ENCODE measurements at regions of chr5 and their contacts with region 1.

Region 1: GRCh38 chr5:95846554-95847260 is 24.2 kb upstream of the GLRX start:
- DNase-seq: peak; percentile 79
- ATAC-seq: peak; percentile 54
- H3K4me3 Mint-ChIP-seq: no peak overlapping the region
- H3K27ac Mint-ChIP-seq: no peak overlapping the region
- H3K4me1 Mint-ChIP-seq: peaks cover 11% of the 10 kb centered on the region
- H3K27me3 Mint-ChIP-seq: peaks cover 4% of the 10 kb centered on the region

Region 2: DNA sequence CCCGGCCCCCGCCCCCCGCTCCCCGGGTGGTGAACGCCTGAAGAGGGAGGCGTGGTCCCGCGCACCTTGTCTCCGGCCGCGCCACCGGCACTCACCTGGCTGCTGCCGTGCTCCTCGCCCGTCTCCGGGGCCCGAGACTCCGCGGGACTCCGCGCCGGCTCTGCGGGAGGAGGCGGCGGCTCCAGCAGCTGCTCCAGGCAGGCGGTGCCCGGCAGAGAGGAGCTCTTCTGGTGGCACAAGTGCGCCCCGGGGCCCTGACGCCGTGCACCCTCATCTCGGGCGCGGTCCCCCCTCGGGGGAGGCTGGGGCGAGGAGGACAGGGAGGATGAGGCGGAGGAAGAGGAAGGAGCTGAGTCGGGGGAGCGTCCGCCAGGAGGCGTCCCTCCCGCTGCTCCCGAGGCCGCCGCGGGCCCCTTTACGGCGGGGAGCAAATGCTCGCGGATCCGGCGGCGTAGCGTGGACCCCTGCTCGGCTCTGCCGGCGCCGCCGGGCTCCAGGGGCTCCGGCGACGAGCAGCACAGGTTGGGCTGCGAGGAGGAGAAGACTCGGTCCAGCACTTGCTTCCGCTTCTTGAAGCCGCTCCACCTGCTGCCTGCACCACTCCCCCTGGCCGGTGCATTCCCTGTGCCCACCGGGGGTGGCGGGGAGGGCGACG is 562.8 kb before region 1 on chr5:
- CTCF ChIA-PET with region 1: no interaction called
- POLR2A ChIA-PET with region 1: no interaction called
- intact Hi-C with region 1: loop called in 1 of 2 experiments (anchors 10 kb)
- DNase-seq: peak; percentile 50
- ATAC-seq: peak; percentile 61
- H3K4me3 Mint-ChIP-seq: peak overlapping the region; percentile 26
- H3K27ac Mint-ChIP-seq: no peak overlapping the region
- H3K4me1 Mint-ChIP-seq: peaks cover 10% of the 10 kb centered on the region
- H3K27me3 Mint-ChIP-seq: peaks cover 52% of the 10 kb centered on the region

Region 3: GRCh38 chr5:95664204-95664786 is 182.4 kb before region 1 on chr5:
- CTCF ChIA-PET with region 1: interaction called, 29 read pairs
- POLR2A ChIA-PET with region 1: no interaction called
- intact Hi-C with region 1: loop called (anchors 1 kb)
- DNase-seq: peak; percentile 54
- ATAC-seq: no peak
- H3K4me3 Mint-ChIP-seq: no peak overlapping the region
- H3K27ac Mint-ChIP-seq: no peak overlapping the region
- H3K4me1 Mint-ChIP-seq: no peaks in the 10 kb centered on the region
- H3K27me3 Mint-ChIP-seq: no peaks in the 10 kb centered on the region

Region 4: DNA sequence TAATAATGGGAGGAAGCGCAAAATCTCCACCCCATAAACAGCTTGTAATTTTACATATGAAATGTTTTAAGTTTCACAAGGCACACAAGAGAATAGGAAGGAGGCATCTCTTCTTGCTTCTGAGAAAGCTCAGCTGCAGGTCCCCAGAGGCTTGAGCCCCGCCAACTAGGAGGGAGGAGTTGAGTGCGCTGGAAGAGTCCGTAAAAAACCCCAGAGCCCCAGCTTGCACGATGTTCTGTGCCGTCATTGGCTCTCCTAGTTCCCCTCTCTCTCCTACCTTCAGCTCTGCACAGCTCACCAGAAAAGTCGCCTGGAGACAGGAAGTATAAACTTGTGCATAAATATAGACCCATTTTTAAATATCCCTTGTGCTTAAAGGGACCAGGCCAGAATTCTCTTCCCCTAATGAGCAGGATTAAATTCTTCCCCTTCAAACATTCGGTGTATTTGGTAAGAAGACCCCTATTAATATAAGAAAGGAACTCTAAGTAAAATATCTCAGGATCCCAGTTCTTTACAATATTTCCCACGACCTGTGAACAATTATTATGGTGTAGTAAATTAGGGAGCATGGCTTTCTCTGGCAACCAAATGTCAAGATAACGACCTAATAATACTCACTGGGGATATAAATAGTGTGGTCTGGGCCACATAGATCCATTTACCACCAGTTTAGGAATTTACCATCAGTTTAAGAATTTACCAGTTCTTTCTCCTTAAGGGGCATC is 37.9 kb before region 1 on chr5:
- CTCF ChIA-PET with region 1: interaction called, 5 read pairs
- POLR2A ChIA-PET with region 1: no interaction called
- intact Hi-C with region 1: loop called in 1 of 2 experiments (anchors 1 kb)
- DNase-seq: peak; percentile 87
- ATAC-seq: peak; percentile 99
- H3K4me3 Mint-ChIP-seq: peak overlapping the region; percentile 28
- H3K27ac Mint-ChIP-seq: peak overlapping the region; percentile 85
- H3K4me1 Mint-ChIP-seq: peaks cover 56% of the 10 kb centered on the region
- H3K27me3 Mint-ChIP-seq: no peaks in the 10 kb centered on the region

Region 5: DNA sequence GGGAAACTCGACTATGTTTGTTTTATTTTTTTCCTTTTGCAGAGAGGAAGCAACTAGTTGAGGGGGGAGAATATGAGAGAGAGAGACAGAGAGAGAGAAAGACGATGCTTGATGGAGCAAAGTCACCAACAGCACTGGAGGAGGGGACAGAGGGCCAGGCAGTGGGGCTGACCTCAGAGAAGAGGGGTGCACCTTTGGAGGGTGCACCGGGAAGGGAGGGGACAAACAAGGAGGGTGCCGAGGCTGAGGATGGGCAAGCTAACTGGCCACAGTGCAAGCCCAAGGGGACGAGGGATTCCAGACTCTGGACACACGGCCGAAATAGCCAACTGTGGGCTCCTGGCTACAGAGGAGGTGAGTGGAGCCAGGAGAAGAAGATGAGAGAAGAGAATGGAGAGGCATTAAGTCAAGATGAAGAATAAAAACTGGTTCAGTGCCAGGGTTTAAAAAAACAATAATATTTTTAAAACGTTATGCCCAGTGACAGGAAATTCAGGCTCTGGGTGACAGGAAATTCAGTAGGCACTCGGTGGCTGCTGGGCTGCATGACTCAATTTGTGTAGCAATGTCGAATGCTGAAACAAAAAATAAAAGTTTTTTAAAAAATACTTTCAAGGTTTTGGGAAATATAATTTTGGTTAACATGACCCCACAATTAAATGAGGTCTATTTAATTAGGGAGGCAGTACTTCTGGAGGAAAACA is 10.9 kb before region 1 on chr5:
- CTCF ChIA-PET with region 1: interaction called, 27 read pairs
- POLR2A ChIA-PET with region 1: interaction called, 4 read pairs
- intact Hi-C with region 1: loop called (anchors 1 kb)
- DNase-seq: peak; percentile 49
- ATAC-seq: no peak
- H3K4me3 Mint-ChIP-seq: peak overlapping the region; percentile 79
- H3K27ac Mint-ChIP-seq: peak overlapping the region; percentile 91
- H3K4me1 Mint-ChIP-seq: peaks cover 44% of the 10 kb centered on the region
- H3K27me3 Mint-ChIP-seq: no peaks in the 10 kb centered on the region

Region 6: DNA sequence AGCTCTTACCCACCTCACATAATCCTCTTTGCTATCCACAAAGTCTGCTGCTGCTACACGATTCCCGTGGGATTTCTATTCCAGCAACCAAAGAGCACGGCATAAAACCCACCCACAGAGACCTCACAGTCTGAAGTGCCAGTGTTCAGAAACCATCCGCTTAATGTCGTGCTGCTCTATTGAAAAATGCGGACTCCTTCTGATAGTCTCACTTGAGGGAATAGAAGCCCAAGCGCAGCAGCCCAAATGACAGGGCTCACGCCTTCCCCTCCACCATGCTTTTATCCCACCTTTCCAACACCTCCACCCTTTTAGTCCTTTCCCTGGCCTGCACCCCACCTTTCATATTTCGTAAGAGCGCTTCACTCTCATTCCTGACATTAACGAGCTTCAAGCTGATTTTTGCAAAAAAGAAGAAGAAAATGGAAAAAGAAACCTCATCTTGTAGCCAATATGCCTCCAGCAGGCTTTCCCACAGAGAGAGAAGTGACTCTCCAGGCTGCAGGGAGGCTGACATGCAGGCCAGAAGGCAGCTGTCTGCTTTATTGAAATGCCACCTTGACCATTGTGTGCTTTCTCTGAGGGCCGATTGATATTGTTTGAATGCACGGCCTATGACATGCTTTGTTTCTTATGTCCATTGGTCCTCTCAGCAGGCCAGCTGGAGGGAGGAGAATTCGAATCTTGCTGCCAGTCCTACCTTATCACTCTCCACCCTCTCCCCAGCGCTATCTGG is 657.0 kb after region 1 on chr5:
- CTCF ChIA-PET with region 1: no interaction called
- POLR2A ChIA-PET with region 1: interaction called, 14 read pairs
- intact Hi-C with region 1: no loop called
- DNase-seq: no peak
- ATAC-seq: no peak
- H3K4me3 Mint-ChIP-seq: no peak overlapping the region
- H3K27ac Mint-ChIP-seq: no peak overlapping the region
- H3K4me1 Mint-ChIP-seq: no peaks in the 10 kb centered on the region
- H3K27me3 Mint-ChIP-seq: peaks cover 4% of the 10 kb centered on the region